Caco-2 (cell line): ENCODE measurements at regions of chr4 and their contacts with region 1.

Region 1: GRCh38 chr4:140049024-140049848 is 104.7 kb downstream of the MAML3 start:
- DNase-seq: peak; percentile 76 to 80
- H3K4me3 ChIP-seq: peak overlapping the region; percentile 21
- H3K4me3 Mint-ChIP-seq: peak overlapping the region; percentile 79
- H3K27ac Mint-ChIP-seq: peak overlapping the region; percentile 96
- H3K4me1 ChIP-seq: peaks cover 58% of the 10 kb centered on the region
- H3K4me1 Mint-ChIP-seq: peaks cover 51% of the 10 kb centered on the region
- H3K27me3 ChIP-seq: no peaks in the 10 kb centered on the region
- H3K27me3 Mint-ChIP-seq: no peaks in the 10 kb centered on the region
- CTCF ChIP-seq: peak in 1 of 2 experiments; percentile 44

Region 2: GRCh38 chr4:139656614-139657486 is 392.4 kb before region 1 on chr4:
- CTCF ChIA-PET with region 1: interaction called, 5 read pairs
- POLR2A ChIA-PET with region 1: no interaction called
- intact Hi-C with region 1: loop called (anchors 5 kb)
- DNase-seq: peak; percentile 79 to 83
- H3K4me3 ChIP-seq: no peak overlapping the region
- H3K4me3 Mint-ChIP-seq: peak overlapping the region; percentile 61
- H3K27ac Mint-ChIP-seq: peak overlapping the region; percentile 40
- H3K4me1 ChIP-seq: peaks cover 47% of the 10 kb centered on the region
- H3K4me1 Mint-ChIP-seq: peaks cover 41% of the 10 kb centered on the region
- H3K27me3 ChIP-seq: no peaks in the 10 kb centered on the region
- H3K27me3 Mint-ChIP-seq: no peaks in the 10 kb centered on the region
- CTCF ChIP-seq: peak; percentile 71 to 89

Region 3: DNA sequence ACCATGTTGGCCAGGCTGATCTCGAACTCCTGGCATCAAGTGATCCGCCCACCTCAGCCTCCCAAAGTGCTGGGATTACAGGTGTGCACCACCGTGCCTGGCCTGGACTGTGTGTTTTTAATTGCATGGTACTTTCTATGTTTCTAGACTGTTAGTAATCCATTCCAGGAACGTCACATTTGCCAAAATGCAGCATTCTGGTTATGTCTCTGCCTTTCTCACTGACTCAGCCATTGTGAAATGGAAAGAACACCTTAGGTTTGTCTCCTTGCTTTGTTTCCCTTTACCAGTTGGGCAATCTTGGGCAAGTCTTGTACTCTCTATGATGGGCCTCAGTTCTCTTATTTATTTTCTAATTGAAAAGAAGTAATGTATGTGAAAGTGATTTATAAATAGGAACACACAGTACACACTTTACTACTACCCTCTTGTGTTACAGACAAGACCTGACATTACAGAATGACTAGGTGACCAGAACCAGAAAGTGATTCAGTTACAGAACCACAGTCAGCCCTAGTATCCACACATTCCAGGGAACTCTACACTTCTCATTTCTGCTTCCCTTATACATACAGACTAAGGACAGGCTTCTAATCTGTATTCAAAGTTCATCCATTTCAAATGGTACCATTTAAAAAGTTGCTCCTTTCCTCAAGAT is 196.5 kb before region 1 on chr4:
- CTCF ChIA-PET with region 1: no interaction called
- POLR2A ChIA-PET with region 1: no interaction called
- intact Hi-C with region 1: loop called (anchors 5 kb)
- DNase-seq: no peak
- H3K4me3 ChIP-seq: no peak overlapping the region
- H3K4me3 Mint-ChIP-seq: no peak overlapping the region
- H3K27ac Mint-ChIP-seq: no peak overlapping the region
- H3K4me1 ChIP-seq: peaks cover 75% of the 10 kb centered on the region
- H3K4me1 Mint-ChIP-seq: peaks cover 42% of the 10 kb centered on the region
- H3K27me3 ChIP-seq: no peaks in the 10 kb centered on the region
- H3K27me3 Mint-ChIP-seq: no peaks in the 10 kb centered on the region
- CTCF ChIP-seq: no peak

Region 4: DNA sequence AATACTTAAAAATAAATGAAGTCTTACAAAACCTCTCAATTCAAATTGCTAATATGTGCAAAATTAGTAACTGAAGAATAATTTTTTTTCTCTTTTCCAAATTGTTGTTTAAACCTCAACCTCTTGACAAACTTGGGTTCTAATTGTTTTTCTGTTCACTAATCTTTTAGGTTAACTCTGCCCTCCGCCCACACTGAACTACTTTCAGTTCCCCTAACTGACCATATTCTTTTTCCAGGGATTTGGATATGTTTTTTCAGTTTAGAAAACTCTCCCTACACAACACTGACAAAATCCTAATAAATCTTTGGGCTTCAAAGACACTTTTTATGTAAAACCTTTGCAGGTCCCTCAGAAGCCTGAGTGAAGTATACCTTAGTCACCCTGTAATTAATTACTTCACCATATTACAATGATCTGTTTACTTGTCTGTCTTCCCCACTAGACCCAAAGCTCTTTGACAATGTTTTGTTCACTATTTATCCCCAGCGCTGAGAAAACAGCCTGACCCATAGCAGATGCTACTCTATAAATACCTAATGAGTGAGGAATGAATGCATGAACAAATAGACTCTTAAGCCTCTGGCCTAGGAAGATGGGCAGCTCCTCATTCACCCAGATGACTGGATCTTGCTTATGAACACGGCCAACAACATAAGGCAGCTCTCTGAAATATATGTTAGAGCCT is 30.2 kb before region 1 on chr4:
- CTCF ChIA-PET with region 1: interaction called, 10 read pairs
- POLR2A ChIA-PET with region 1: interaction called, 7 read pairs
- intact Hi-C with region 1: loop called (anchors 2 kb)
- DNase-seq: peak; percentile 44 to 52
- H3K4me3 ChIP-seq: no peak overlapping the region
- H3K4me3 Mint-ChIP-seq: peak overlapping the region; percentile 60
- H3K27ac Mint-ChIP-seq: peak overlapping the region; percentile 66
- H3K4me1 ChIP-seq: peaks cover 50% of the 10 kb centered on the region
- H3K4me1 Mint-ChIP-seq: peaks cover 54% of the 10 kb centered on the region
- H3K27me3 ChIP-seq: no peaks in the 10 kb centered on the region
- H3K27me3 Mint-ChIP-seq: no peaks in the 10 kb centered on the region
- CTCF ChIP-seq: no peak

Region 5: DNA sequence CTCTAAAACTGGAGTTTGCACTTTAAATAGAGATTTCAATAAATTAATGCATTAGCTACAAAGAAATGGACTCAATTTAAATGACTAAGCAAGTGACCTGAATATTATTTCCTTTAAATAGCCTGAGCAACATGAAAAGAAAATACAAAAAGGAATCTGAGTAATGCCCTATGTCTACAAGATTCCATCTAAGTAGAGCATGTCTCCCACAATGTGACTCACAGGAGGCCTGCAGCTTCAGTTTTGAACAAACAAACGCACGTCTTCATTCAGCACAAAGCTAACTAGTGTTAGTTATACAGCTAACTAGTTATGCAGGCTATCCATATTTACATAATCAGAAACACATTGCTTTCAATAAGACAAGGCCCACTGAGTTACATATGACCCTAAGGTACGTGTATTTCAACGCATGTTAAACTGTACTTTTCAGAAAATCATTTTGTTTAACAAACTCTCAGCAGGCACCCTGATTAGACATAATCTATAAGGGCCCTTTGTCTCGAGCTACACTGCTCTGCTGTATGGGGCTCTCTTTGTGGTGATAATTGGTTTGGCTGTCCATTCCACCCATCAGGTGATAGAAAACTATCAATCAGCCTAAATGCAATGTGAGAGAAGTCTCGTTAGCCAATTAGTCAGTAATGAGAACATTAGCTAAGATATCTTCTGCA is 11.7 kb before region 1 on chr4:
- CTCF ChIA-PET with region 1: interaction called, 6 read pairs
- POLR2A ChIA-PET with region 1: interaction called, 9 read pairs
- intact Hi-C with region 1: loop called (anchors 1 kb)
- DNase-seq: peak; percentile 68 to 80
- H3K4me3 ChIP-seq: no peak overlapping the region
- H3K4me3 Mint-ChIP-seq: peak overlapping the region; percentile 8
- H3K27ac Mint-ChIP-seq: peak overlapping the region; percentile 16
- H3K4me1 ChIP-seq: peaks cover 44% of the 10 kb centered on the region
- H3K4me1 Mint-ChIP-seq: peaks cover 44% of the 10 kb centered on the region
- H3K27me3 ChIP-seq: no peaks in the 10 kb centered on the region
- H3K27me3 Mint-ChIP-seq: no peaks in the 10 kb centered on the region
- CTCF ChIP-seq: no peak

Region 6: GRCh38 chr4:140153718-140154571 is 104.7 kb after region 1 on chr4 and contains the start of gene MAML3:
- CTCF ChIA-PET with region 1: interaction called, 5 read pairs
- POLR2A ChIA-PET with region 1: no interaction called
- intact Hi-C with region 1: loop called (anchors 1 kb)
- DNase-seq: peak; percentile 95 to 96
- H3K4me3 ChIP-seq: peak within 1 kb of the TSS; percentile 91
- H3K4me3 Mint-ChIP-seq: peak within 1 kb of the TSS; percentile 97
- H3K27ac Mint-ChIP-seq: peak within 1 kb of the TSS; percentile 97
- H3K4me1 ChIP-seq: 0 out of 2 replicates have a peak, but pooled peaks cover 5% of the 10 kb centered on the region
- H3K4me1 Mint-ChIP-seq: no peaks in the 10 kb centered on the region
- H3K27me3 ChIP-seq: no peaks in the 10 kb centered on the region
- H3K27me3 Mint-ChIP-seq: no peaks in the 10 kb centered on the region
- CTCF ChIP-seq: no peak
- total RNA-seq, gene MAML3: 12.1 TPM in 2 replicates